OCI-LY7 (cell line): ENCODE measurements at regions of chr6 and their contacts with region 1.

Region 1: GRCh38 chr6:8983188-8983688 is 547.9 kb upstream of the SLC35B3 start:
- DNase-seq: peak; percentile 47
- H3K4me3 ChIP-seq: no peak overlapping the region
- H3K27ac ChIP-seq: no peak overlapping the region
- H3K4me1 ChIP-seq: no peaks in the 10 kb centered on the region
- CTCF ChIP-seq: peak; percentile 96

Region 2: DNA sequence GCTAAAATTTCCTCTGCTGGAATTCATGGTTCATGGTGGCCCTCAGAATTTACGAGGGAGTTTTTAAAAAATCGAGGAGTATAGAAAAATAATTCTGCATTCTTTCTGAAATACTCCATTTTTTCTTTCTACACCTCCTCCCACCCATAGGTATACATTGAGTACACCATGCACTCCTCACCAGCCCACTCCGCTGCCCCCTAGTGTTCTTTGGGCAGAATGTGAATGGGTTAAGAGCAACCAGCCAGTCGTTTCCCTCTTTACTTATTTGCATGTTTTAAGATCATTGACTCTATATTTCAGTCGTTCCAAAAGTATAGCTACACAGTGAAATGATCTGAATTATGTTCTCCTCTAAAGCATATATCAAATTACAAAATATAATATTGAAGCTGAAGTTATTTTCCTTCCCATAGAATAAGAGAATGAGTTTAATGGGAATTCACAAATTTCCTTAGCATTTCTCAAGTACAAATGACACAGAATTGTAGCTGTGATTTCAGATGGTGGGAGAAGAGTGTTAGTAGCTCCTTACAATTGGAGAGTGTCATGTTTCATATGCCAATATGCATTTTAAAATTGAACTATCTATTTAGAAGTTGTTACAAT is 429.8 kb after region 1 on chr6:
- CTCF ChIA-PET with region 1: no interaction called
- POLR2A ChIA-PET with region 1: interaction called, 4 read pairs
- intact Hi-C with region 1: loop called (anchors 1 kb)
- DNase-seq: peak; percentile 29
- H3K4me3 ChIP-seq: no peak overlapping the region
- H3K27ac ChIP-seq: no peak overlapping the region
- H3K4me1 ChIP-seq: no peaks in the 10 kb centered on the region
- CTCF ChIP-seq: peak; percentile 82

Region 3: GRCh38 chr6:10434692-10435376 is 1451.6 kb after region 1 on chr6:
- CTCF ChIA-PET with region 1: no interaction called
- POLR2A ChIA-PET with region 1: interaction called, 3 read pairs
- intact Hi-C with region 1: loop called (anchors 2 kb)
- DNase-seq: peak; percentile 60
- H3K4me3 ChIP-seq: no peak overlapping the region
- H3K27ac ChIP-seq: no peak overlapping the region
- H3K4me1 ChIP-seq: peaks cover 6% of the 10 kb centered on the region
- CTCF ChIP-seq: peak; percentile 87